PC-9 (cell line): ENCODE measurements at regions of chr1 and their contacts with region 1.

Region 1: GRCh38 chr1:165073185-165074007 is 283.1 kb downstream of the LMX1A start:
- DNase-seq: peak; percentile 12 to 46
- H3K4me3 ChIP-seq: no peak overlapping the region
- H3K27ac ChIP-seq: no peak overlapping the region
- H3K4me1 ChIP-seq: no peaks in the 10 kb centered on the region
- H3K27me3 ChIP-seq: no peaks in the 10 kb centered on the region
- CTCF ChIP-seq: peak; percentile 85

Region 2: DNA sequence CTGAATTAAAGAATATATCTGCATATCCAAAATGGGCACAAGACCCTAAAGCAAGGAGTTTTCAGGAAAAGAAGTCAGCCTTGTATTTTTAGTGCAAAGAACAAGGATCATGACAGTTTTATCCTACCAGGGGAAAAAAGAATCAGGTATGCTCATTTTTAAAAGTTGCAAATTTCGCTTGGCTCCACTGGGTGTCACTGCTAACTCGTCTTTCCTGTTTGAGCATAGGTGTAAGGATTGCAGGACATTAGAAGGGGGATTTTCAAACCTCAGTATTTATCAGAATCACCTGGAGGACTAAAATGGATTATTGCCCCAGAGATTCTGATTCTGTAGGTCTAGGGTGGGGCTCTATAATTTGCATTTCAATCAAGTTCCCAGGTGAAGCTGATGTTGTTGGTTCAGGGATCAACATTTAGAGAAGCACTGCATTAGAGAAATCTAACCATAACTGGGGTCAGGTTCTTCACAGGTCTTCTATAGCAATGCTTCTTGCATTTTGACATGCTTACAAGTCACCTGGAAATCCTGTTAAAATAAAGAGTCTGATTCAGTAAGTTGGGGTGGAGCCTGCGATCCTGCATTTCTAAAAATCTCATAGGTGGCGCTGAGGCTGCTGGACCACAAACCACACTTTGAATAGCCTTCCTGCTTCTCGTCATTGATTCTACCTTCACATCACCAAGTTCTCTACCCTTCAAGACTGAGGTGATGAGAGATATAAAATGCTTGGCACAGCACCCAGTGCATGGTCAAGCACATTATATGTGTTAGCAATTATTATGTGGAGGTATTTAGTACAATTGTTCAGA is 1712.1 kb before region 1 on chr1:
- CTCF ChIA-PET with region 1: interaction called, 4 read pairs
- POLR2A ChIA-PET with region 1: no interaction called
- intact Hi-C with region 1: loop called (anchors 1 kb)
- DNase-seq: peak in 1 of 2 experiments; percentile 37
- H3K4me3 ChIP-seq: no peak overlapping the region
- H3K27ac ChIP-seq: no peak overlapping the region
- H3K4me1 ChIP-seq: no peaks in the 10 kb centered on the region
- H3K27me3 ChIP-seq: no peaks in the 10 kb centered on the region
- CTCF ChIP-seq: no peak; the same call in 1 of the 2 replicates

Region 3: GRCh38 chr1:163410073-163410999 is 1663.1 kb before region 1 on chr1:
- CTCF ChIA-PET with region 1: no interaction called
- POLR2A ChIA-PET with region 1: no interaction called
- intact Hi-C with region 1: loop called (anchors 1 kb)
- DNase-seq: peak; percentile 27 to 36
- H3K4me3 ChIP-seq: no peak overlapping the region
- H3K27ac ChIP-seq: no peak overlapping the region
- H3K4me1 ChIP-seq: no peaks in the 10 kb centered on the region
- H3K27me3 ChIP-seq: no peaks in the 10 kb centered on the region
- CTCF ChIP-seq: peak; percentile 94

Region 4: GRCh38 chr1:163528710-163529348 is 1544.6 kb before region 1 on chr1:
- CTCF ChIA-PET with region 1: interaction called, 3 read pairs
- POLR2A ChIA-PET with region 1: no interaction called
- intact Hi-C with region 1: loop called (anchors 1 kb)
- DNase-seq: no peak
- H3K4me3 ChIP-seq: no peak overlapping the region
- H3K27ac ChIP-seq: no peak overlapping the region
- H3K4me1 ChIP-seq: no peaks in the 10 kb centered on the region
- H3K27me3 ChIP-seq: no peaks in the 10 kb centered on the region
- CTCF ChIP-seq: peak; percentile 83

Region 5: DNA sequence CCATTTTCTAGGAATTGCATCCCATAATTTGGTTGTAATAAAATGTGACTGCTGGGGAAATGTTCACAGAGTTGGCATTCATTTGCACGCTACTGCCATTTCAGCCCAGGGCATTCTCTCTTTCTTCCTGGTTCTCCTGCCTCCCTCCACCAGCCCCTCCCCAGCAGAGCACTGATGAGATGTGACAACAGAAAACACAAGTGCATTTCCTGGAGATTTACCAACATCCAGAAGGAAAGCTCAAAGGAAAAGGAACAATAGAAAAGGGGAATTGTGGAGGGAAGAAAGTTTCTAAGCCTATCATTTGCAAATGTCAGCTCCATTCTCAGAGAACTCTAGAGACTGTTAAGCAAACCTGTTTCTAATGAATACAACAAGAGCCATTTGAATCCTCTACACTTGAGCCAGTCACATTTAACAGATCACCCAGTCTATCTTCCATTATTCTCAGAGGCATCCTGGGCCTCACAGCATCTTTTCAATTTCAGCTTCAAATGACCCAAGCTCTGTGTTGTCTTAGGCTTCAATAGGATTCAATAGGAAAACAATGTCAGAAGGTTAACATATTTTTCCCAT is 910.0 kb before region 1 on chr1:
- CTCF ChIA-PET with region 1: no interaction called
- POLR2A ChIA-PET with region 1: no interaction called
- intact Hi-C with region 1: loop called (anchors 1 kb)
- DNase-seq: no peak
- H3K4me3 ChIP-seq: no peak overlapping the region
- H3K27ac ChIP-seq: no peak overlapping the region
- H3K4me1 ChIP-seq: no peaks in the 10 kb centered on the region
- H3K27me3 ChIP-seq: no peaks in the 10 kb centered on the region
- CTCF ChIP-seq: no peak

Region 6: DNA sequence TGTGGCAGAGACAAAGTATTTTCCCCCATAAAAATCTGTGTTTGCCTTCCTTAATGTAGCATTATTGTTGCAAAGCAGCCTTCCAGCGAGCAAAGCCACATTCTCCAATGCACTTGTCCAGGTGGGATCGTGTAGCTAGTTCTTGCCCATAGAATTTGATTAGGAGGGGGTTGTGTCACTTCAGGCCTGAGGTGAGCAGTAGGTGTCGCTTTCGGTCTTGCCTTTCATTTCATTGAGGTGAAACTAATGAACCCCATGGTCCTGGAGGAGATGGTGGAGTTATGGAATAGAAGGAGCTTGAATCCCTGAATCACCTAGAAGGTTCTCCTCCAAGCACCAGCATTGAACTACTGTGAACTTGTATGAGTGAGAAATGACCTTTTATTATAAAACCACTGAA is 833.3 kb before region 1 on chr1:
- CTCF ChIA-PET with region 1: no interaction called
- POLR2A ChIA-PET with region 1: no interaction called
- intact Hi-C with region 1: loop called (anchors 1 kb)
- DNase-seq: peak in 1 of 2 experiments; percentile 5
- H3K4me3 ChIP-seq: no peak overlapping the region
- H3K27ac ChIP-seq: no peak overlapping the region
- H3K4me1 ChIP-seq: no peaks in the 10 kb centered on the region
- H3K27me3 ChIP-seq: no peaks in the 10 kb centered on the region
- CTCF ChIP-seq: no peak

Region 7: GRCh38 chr1:164611754-164612642 is 461.4 kb before region 1 on chr1:
- CTCF ChIA-PET with region 1: no interaction called
- POLR2A ChIA-PET with region 1: no interaction called
- intact Hi-C with region 1: no loop called
- DNase-seq: peak; percentile 79 to 96
- H3K4me3 ChIP-seq: no peak overlapping the region; the same call in 1 of the 2 replicates
- H3K27ac ChIP-seq: peak overlapping the region; percentile 79
- H3K4me1 ChIP-seq: peaks cover 44% of the 10 kb centered on the region
- H3K27me3 ChIP-seq: no peaks in the 10 kb centered on the region
- CTCF ChIP-seq: no peak

Region 8: GRCh38 chr1:164786980-164787833 is 286.2 kb before region 1 on chr1:
- CTCF ChIA-PET with region 1: no interaction called
- POLR2A ChIA-PET with region 1: no interaction called
- intact Hi-C with region 1: loop called (anchors 5 kb)
- DNase-seq: peak; percentile 66 to 78
- H3K4me3 ChIP-seq: no peak overlapping the region
- H3K27ac ChIP-seq: peak overlapping the region; percentile 54
- H3K4me1 ChIP-seq: peaks cover 22% of the 10 kb centered on the region
- H3K27me3 ChIP-seq: no peaks in the 10 kb centered on the region
- CTCF ChIP-seq: peak; percentile 95

Region 9: DNA sequence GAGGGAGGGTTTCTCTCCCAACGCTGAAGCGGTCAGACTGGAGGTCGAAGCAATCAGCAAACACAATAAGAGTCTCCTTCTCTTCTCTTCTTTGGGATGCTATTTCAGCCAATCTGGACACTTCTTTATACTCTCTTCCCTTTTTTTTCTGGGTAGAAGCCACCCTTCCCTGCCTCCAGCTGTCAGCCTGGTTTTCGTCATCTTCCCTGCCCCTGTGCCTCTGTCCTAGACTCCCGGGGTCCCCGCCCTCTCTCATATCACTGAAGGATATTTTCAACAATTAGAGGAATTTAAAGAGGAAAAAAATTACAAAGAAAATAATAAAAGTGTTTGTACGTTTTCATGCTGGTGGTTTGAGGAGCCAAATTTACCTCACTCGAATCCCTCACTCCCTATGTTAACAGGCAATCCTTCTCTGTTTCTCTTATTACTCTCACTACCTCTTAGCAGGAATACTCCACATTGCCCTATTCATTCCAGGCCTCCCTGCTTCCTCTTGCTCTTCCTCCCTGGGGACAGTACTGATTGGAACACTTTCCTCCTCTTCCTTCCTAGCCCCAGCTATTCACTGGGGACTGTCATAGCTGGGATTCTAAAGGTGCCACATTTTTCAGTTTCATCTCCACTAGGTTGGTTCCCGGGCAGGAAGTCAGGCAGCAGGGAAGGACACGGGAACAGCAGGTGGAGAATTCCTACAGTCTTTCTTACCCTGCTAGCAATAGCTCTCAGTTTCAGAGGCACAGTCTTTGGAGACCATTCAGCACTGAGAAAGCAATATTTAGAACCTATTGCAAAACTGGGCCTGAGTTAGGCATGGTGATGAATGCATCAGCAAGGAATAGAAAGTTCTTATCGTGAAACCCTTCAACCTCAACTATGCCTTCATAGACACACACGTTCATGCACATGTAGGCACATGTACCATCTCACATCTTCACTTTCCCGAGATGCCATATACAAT is 226.4 kb before region 1 on chr1:
- CTCF ChIA-PET with region 1: no interaction called
- POLR2A ChIA-PET with region 1: no interaction called
- intact Hi-C with region 1: no loop called
- DNase-seq: no peak
- H3K4me3 ChIP-seq: no peak overlapping the region
- H3K27ac ChIP-seq: no peak overlapping the region
- H3K4me1 ChIP-seq: no peaks in the 10 kb centered on the region
- H3K27me3 ChIP-seq: no peaks in the 10 kb centered on the region
- CTCF ChIP-seq: no peak

Region 10: DNA sequence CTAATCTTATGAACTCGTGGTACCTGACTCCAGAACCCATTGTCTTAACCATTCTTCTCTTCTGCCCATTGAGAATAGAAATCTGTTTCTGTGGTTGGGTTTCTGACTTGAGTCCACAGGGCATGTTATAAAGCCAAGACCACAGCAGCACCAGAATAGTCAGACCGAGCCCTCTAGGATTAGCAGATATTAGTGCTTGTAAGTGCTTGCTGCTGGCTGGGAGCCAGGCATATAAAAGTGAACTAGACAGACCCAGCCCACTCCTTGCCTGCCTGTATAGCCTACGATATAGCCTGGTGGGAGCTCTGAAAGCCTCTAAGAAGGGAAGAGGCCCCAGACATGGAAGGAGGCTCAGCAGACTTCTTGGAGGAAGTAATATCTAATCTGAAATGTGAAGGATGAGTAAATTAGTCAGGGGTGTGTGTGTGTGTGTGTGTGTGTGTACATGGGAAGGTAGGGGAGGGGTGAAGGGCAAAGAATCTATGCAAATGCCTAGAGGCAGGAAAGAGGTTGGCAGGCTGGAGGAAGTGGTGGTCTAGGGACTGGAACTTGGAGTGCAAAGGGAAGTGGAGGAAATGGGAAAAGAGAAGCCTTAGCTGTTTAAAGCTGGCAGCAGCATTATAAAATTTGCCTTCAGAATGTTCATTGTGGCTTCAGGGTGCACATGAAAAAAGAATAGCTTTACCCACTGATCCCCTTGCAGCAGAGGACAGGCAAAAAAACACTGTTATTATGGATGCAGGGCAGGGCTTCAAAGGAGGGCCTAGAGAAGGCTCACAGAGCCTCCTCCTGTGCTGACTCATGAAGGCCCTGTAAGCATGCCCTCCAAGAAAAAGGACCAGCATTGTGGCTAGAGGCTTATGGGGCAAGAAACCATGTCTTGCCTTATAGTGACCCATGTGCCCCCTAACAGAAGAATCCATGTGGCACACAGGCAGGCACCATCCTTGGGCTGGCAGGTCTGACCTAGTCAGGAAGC is 113.9 kb after region 1 on chr1:
- CTCF ChIA-PET with region 1: no interaction called
- POLR2A ChIA-PET with region 1: no interaction called
- intact Hi-C with region 1: no loop called
- DNase-seq: no peak
- H3K4me3 ChIP-seq: no peak overlapping the region
- H3K27ac ChIP-seq: no peak overlapping the region
- H3K4me1 ChIP-seq: no peaks in the 10 kb centered on the region
- H3K27me3 ChIP-seq: no peaks in the 10 kb centered on the region
- CTCF ChIP-seq: no peak